ENCODE measurements at regions of chr7 and their contacts with region 1.

Region 1: GRCh38 chr7:80918909-80919662 is at the start of gene SEMA3C:
- DNase-seq: peak; percentile 94
- H3K4me3 Mint-ChIP-seq: peak within 1 kb of the TSS; percentile 91
- H3K27ac Mint-ChIP-seq: peak within 1 kb of the TSS; percentile 87
- H3K4me1 Mint-ChIP-seq: peaks cover 29% of the 10 kb centered on the region
- H3K27me3 Mint-ChIP-seq: no peaks in the 10 kb centered on the region
- CTCF ChIP-seq: no peak
- total RNA-seq, gene SEMA3C: 91.0 and 140 TPM in 2 replicates

Region 2: GRCh38 chr7:80699045-80699638 is 219.9 kb before region 1 on chr7:
- CTCF ChIA-PET with region 1: interaction called, 5 read pairs
- POLR2A ChIA-PET with region 1: interaction called, 9 read pairs
- intact Hi-C with region 1: loop called (anchors 1 kb)
- DNase-seq: peak; percentile 69
- H3K4me3 Mint-ChIP-seq: no peak overlapping the region
- H3K27ac Mint-ChIP-seq: peak overlapping the region; percentile 50
- H3K4me1 Mint-ChIP-seq: peaks cover 10% of the 10 kb centered on the region
- H3K27me3 Mint-ChIP-seq: no peaks in the 10 kb centered on the region
- CTCF ChIP-seq: peak; percentile 63

Region 3: DNA sequence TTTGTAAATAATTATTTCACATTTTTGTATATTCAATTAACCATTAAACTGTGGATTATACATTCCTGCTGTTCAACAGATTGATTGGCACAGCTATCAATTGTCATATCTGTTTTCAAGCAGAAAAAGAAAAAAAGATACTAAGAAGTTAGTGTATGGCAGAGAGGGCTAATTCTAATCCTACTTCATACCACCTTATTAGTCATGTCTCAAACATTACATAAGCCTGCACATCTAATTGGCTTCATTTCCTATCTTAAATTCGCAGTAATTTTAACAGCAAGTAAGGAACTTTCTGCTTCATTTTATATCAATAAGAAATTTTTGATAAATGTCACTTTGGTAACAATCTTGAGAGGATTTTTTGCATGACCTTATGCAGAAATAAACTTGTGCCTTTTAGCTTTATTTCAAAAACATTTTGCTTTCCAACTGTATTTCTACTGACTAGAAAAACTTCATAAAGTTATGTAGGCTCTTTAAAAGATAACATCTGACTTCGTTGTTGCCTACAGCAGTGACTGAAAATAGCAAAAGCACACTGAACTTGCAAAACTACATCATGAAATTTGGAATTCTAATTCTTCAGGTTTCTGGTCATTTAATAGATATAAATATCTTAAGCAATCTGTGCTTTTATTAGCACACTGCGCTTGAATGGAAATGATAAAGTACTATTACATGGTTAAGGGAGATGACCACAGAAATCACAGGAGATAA is 111.8 kb before region 1 on chr7:
- CTCF ChIA-PET with region 1: interaction called, 4 read pairs
- POLR2A ChIA-PET with region 1: interaction called, 3 read pairs
- intact Hi-C with region 1: loop called (anchors 5 kb)
- DNase-seq: no peak
- H3K4me3 Mint-ChIP-seq: no peak overlapping the region
- H3K27ac Mint-ChIP-seq: no peak overlapping the region
- H3K4me1 Mint-ChIP-seq: peaks cover 4% of the 10 kb centered on the region
- H3K27me3 Mint-ChIP-seq: no peaks in the 10 kb centered on the region
- CTCF ChIP-seq: no peak

Region 4: DNA sequence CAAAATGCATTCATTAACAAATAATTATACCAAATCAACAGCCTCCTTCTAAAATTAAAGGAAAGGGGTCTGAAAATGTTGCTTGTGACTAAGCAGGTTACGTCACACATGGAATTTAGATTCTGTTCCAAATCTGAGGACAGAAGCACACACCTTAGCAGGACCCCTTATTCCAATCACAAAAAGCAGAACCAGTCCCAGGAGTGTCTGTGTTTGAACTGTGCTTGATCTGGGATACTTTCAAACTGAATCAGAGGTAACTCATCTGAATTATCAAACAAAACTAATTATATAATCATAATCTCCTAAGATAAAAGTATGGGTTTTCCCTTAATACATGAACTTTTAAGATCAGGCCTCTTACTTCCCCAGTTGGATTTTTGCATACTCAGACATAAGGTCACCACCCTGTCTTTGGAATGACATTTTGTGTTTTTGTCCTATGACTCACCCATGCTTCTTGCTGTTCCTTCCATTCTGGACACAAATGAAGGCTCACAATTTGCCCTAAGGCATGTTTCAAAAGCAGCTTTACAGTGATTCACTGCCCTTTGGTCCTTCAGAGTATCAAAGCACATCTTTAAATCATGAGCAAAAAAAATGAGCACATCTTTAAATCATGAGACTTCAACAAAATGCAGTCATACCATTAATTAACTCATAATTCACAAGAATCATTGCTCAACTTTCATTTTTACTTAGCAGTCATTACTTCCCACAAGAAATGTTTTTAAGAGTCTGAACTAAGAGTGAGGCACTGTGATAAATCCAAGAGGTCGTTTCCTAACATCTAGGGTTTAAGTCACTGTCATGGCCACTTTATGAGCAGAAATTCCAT is 35.7 kb before region 1 on chr7:
- CTCF ChIA-PET with region 1: interaction called, 4 read pairs
- POLR2A ChIA-PET with region 1: interaction called, 70 read pairs
- intact Hi-C with region 1: loop called (anchors 1 kb)
- DNase-seq: peak; percentile 98
- H3K4me3 Mint-ChIP-seq: peak overlapping the region; percentile 3
- H3K27ac Mint-ChIP-seq: peak overlapping the region; percentile 10
- H3K4me1 Mint-ChIP-seq: peaks cover 35% of the 10 kb centered on the region
- H3K27me3 Mint-ChIP-seq: no peaks in the 10 kb centered on the region
- CTCF ChIP-seq: no peak

Region 5: DNA sequence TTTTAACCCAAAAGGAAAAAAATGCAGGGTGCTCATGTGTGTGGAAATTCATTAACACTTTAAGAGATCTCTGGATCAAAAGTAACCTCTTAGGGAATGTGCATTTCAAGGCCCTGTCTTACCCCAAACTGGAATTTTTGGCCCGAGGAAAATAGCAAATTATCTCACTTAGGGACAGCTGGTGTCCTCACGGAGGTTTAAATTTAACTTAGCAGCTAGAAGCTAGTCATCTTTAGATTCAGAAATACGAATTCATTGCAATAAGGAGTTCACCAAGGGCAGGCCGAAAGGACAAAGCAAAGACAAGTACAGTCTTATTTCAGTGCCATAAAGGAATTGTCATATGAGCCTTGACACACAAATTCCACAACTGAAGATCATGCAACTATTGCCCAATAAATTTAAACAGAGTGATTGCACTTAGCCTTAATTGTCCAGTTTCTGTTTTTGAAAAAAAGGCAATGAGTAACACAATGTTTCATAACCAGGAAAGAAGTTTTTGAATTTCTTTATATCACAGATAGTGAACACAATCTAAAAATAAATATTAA is 22.2 kb after region 1 on chr7:
- CTCF ChIA-PET with region 1: interaction called, 12 read pairs
- POLR2A ChIA-PET with region 1: interaction called, 115 read pairs
- intact Hi-C with region 1: loop called (anchors 1 kb)
- DNase-seq: peak; percentile 89
- H3K4me3 Mint-ChIP-seq: peak overlapping the region; percentile 26
- H3K27ac Mint-ChIP-seq: peak overlapping the region; percentile 76
- H3K4me1 Mint-ChIP-seq: peaks cover 20% of the 10 kb centered on the region
- H3K27me3 Mint-ChIP-seq: no peaks in the 10 kb centered on the region
- CTCF ChIP-seq: no peak

Region 6: DNA sequence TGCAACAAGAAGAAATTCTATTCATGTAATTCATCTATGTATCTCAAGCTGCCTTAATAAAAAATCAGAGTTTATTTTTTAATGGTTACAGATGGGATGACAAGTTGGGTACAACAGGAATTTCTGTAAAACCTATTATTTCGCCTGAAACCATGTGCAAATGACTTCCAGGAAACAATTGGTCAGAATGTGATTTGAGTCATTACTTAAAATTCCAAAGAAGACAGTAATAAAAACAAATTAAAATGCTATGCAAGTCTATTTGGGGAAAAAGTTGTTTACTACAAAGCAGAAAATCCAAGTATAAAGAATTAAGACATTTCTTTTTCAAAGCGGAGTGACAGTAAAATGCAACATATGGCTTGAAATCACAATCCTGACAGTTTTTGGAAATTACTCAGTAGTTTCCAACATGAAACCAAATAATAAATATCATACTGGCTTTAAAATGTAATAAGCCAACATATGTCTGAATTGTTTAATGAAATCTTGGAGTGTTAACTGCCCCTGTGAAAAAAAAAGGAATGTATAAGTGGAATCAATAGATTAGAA is 41.2 kb after region 1 on chr7:
- CTCF ChIA-PET with region 1: no interaction called
- POLR2A ChIA-PET with region 1: no interaction called
- intact Hi-C with region 1: no loop called
- DNase-seq: no peak
- H3K4me3 Mint-ChIP-seq: no peak overlapping the region
- H3K27ac Mint-ChIP-seq: no peak overlapping the region
- H3K4me1 Mint-ChIP-seq: no peaks in the 10 kb centered on the region
- H3K27me3 Mint-ChIP-seq: no peaks in the 10 kb centered on the region
- CTCF ChIP-seq: no peak

Region 7: DNA sequence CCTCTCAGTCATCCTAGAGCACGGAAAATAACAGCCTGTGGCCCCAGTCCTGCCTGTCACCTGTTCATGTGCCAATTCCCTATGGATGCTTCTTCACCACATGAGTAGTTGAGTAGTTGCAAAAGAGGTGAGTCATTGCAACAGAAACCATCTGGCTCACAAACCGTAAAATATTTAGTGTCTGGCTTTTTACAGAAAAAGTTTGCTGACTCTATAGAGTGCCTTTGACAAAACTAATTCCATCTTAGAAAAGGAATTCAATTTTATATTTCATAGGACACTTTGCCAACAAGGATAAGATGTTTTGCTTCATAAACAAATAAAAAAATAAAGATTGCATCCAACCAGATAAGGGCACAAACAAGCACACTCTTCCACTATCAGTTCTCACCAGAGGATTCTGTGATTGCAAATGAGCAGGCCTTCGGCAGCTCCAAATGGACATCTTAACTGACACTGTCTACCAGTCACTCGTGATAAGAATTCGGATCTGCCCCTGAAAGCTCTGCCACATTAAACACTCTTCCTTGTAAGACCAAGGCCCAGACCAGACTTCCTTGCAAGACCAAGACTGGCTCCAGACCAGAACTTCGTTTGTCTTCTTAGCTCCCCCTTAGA is 242.5 kb after region 1 on chr7:
- CTCF ChIA-PET with region 1: no interaction called
- POLR2A ChIA-PET with region 1: interaction called, 4 read pairs
- intact Hi-C with region 1: loop called (anchors 5 kb)
- DNase-seq: peak; percentile 96
- H3K4me3 Mint-ChIP-seq: no peak overlapping the region
- H3K27ac Mint-ChIP-seq: peak overlapping the region; percentile 73
- H3K4me1 Mint-ChIP-seq: peaks cover 22% of the 10 kb centered on the region
- H3K27me3 Mint-ChIP-seq: no peaks in the 10 kb centered on the region
- CTCF ChIP-seq: no peak

Region 8: DNA sequence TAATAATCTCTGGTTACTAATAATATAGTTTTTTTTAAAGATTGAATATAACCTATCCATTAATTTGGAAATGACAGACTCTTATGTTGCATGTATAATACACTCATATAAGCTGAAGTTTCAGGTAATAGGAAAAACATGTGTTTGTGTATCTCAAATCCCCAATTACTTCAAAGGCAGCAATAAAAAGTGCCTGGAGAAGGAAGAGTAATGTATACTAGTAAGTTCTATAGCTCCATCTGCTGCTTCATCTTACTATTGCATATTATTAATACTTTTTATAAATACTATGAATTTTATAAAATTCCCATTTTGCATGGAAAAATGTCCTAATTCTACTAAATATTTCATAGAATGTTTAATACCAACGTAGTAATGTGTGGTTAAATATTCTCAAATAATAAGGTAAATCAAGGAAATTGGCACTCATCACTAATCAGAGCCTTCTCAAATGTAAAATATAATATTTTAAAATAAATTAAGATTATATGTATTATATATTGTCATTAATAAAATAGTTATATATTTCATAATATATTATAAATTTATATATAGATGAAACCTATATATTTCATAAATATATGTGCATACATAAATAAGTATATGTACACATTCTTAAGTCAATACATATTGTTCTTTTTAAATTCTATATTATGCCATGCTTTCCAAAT is 538.9 kb after region 1 on chr7:
- CTCF ChIA-PET with region 1: interaction called, 36 read pairs
- POLR2A ChIA-PET with region 1: interaction called, 25 read pairs
- intact Hi-C with region 1: loop called (anchors 1 kb)
- DNase-seq: peak; percentile 37
- H3K4me3 Mint-ChIP-seq: no peak overlapping the region
- H3K27ac Mint-ChIP-seq: no peak overlapping the region
- H3K4me1 Mint-ChIP-seq: peaks cover 6% of the 10 kb centered on the region
- H3K27me3 Mint-ChIP-seq: no peaks in the 10 kb centered on the region
- CTCF ChIP-seq: peak; percentile 46

Measured in MCF 10A (cell line).